ENCODE measurements at regions of chr5 and their contacts with region 1.

Region 1: DNA sequence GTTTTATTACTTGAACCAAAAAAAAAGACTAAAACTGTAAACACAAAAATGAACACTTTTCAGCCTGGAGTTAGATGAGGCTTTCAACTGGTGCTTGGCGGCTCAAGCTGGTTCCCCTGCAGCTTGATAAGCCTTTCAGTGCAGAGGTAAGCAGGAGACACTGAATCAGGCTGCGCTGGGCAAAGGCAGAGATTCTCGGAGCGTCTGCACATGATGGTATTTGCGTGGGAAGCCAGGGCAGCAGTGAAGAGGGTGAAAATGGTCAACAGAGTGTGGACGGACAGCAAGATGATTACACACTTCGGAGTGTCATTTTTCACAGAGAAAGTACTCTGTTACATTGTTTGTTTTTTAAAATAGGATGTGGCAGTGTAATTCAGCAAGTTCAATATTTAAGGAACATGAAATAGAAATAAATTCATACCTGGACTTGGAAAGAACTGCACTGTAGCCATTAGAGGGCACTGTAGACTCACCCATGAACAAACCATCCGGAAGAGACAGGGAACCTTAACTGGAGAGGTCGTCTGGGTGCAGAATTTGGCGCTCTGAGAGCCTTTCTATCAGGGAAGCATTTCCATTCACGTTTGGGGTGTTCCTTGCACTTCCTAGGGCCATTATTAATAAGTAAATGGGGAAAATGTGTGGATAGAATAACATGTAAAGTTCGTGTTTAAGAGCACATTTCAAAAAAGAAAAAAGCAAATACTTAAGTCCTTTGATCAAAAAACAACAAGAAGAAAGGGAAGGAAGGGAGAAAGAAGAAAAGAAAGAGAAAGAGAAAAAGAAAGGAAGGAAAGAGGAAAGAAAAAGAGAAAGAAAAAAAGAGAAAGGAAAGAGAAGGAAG is 69.8 kb downstream of the ICE1 start:
- DNase-seq: peak; percentile 36
- H3K4me3 ChIP-seq: no peak overlapping the region
- H3K27ac ChIP-seq: no peak overlapping the region
- H3K4me1 ChIP-seq: no peaks in the 10 kb centered on the region
- H3K27me3 ChIP-seq: no peaks in the 10 kb centered on the region
- CTCF ChIP-seq: peak; percentile 42

Region 2: DNA sequence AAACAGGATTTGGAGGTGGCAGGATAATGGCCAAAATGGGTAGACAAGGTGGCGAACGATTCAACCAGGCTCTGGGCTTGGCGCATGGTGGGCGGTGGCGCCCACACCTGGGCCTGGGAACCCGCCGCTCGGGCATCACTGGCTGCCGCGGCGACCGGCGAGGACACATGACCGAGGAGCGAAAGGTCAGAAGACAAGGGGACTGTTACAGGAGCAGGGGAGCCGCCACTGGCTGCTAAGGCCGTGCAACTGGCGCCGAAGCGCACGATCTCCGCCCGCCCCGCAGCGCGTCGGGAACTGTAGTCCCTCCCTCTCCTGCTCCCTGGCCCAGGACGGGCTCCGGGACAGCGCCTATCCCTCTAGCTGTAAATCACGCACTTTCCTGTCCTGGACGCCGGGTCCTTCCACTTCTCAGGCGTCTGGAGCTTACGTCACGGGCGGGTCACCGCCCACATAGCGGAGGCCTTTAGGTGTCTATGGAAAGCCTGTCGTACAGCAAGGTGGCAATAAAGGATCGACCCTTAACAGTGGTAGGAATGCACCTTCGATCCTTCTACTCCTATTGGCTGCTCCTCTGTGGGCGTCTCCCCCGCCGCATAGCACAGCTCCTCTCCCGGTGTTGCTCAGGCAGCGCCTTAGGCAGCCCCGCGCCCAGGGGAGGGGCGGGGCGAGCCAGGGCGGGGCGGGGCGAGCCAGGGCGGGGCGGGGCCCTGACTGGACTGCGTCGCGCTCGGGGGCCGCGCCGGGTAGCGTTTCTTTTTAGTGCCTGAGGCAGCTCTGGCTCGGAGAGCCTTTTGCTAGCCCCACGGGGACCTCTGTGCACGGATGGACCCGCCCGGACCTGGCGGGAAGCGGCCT is 70.1 kb before region 1 on chr5 and contains the start of gene ICE1:
- intact Hi-C with region 1: loop called (anchors 2 kb)
- DNase-seq: peak; percentile 97
- H3K4me3 ChIP-seq: peak within 1 kb of the TSS; percentile 98
- H3K27ac ChIP-seq: peak within 1 kb of the TSS; percentile 93
- H3K4me1 ChIP-seq: peaks cover 6% of the 10 kb centered on the region
- H3K27me3 ChIP-seq: no peaks in the 10 kb centered on the region
- CTCF ChIP-seq: no peak
- total RNA-seq, gene ICE1: 19.2 to 20.1 TPM

Region 3: GRCh38 chr5:5755888-5756287 is 263.6 kb after region 1 on chr5:
- intact Hi-C with region 1: no loop called
- DNase-seq: no peak
- H3K4me3 ChIP-seq: no peak overlapping the region
- H3K27ac ChIP-seq: no peak overlapping the region
- H3K4me1 ChIP-seq: no peaks in the 10 kb centered on the region
- H3K27me3 ChIP-seq: no peaks in the 10 kb centered on the region
- CTCF ChIP-seq: no peak

Region 4: DNA sequence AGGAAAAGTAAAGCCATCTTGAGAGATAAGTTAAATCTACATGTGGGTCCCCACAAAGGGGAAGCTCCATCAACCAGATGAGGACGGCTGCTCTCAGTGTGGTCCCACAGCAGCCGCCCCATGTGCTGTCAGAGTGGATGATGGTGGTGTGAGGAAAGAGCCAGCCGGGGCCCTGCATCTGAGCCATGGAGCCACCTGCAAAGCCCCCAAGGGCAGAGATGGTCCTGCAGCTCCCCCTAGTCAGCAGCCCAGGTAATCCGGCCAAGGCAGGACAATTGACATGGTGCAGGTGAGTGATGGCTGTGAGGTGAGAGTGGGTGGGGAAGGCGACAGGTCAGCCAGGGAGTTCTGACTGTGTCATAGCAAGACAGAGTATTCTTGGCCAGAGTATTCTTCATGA is 389.0 kb after region 1 on chr5:
- intact Hi-C with region 1: loop called (anchors 5 kb)
- DNase-seq: no peak
- H3K4me3 ChIP-seq: no peak overlapping the region
- H3K27ac ChIP-seq: no peak overlapping the region
- H3K4me1 ChIP-seq: no peaks in the 10 kb centered on the region
- H3K27me3 ChIP-seq: no peaks in the 10 kb centered on the region
- CTCF ChIP-seq: no peak

Region 5: GRCh38 chr5:6383376-6383775 is 891.1 kb after region 1 on chr5:
- intact Hi-C with region 1: loop called (anchors 10 kb)
- DNase-seq: no peak
- H3K4me3 ChIP-seq: no peak overlapping the region
- H3K27ac ChIP-seq: no peak overlapping the region
- H3K4me1 ChIP-seq: no peaks in the 10 kb centered on the region
- H3K27me3 ChIP-seq: no peaks in the 10 kb centered on the region
- CTCF ChIP-seq: no peak

Region 6: DNA sequence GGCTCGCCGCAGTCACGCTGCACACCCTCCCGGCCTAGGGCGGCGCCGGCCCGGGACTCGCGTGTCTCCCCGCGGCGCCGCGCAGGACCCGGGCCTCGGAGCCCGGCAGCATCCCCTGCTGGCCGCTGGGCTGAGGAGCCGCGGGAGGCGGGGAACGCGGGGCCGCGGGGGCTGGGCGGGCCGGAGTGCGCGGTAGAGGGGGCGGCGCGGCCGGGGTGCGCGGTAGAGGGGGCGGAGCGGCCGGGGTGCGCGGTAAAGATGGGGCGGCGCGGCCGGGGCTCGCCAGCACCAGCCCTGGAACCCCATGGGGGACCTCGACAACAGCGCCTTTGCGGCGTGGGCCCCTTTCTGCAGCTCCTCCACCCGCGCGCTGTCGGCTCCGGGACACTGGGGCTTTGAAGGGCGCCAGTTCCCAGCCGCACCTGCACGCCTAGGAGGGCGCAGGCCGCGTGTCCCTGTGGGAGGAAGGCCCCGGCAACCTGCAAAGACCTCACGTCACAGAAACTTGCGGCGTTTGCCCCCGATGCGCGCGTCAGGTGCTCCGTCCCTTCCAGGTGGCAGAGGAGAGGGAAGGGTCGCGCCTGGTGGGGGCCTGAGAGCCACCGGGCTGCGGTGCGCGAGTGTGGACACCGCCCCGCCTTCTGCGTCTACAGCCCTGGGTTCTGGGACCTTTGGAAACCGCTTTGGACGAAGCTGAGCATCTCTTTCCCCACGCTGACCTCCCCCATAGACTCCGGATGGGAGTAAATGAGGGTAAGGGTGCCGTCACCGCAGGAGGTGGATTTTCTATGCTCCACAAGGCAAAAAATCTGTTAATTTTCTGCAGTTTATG is 1091.0 kb after region 1 on chr5:
- intact Hi-C with region 1: loop called (anchors 10 kb)
- DNase-seq: no peak
- H3K4me3 ChIP-seq: peak overlapping the region; percentile 20
- H3K27ac ChIP-seq: no peak overlapping the region
- H3K4me1 ChIP-seq: no peaks in the 10 kb centered on the region
- H3K27me3 ChIP-seq: peaks cover 13% of the 10 kb centered on the region
- CTCF ChIP-seq: no peak

Region 7: DNA sequence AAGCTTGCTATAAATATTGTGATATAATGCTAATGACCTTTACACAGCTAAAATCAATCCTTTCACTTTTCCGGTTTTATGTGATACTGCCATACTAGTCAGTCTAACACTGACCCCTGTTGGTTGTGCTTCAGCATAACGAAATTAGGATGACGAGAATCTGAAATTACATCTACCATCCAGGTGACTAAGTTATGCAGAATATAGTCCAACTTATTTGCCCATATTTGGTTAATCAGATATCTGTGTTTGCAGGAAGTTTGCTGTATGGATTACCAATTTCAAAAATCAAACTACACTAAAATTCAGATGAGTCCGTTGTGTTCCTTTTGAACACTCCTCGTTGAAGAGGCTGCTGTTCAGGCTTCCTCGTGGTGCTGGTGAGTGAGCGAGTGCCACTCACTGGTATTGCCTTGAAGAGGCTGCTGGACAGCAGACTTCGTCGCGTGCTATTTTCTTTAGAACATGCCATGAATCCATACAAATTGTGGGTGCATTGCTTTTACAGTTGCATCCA is 1253.5 kb after region 1 on chr5:
- intact Hi-C with region 1: loop called (anchors 10 kb)
- DNase-seq: no peak
- H3K4me3 ChIP-seq: no peak overlapping the region
- H3K27ac ChIP-seq: no peak overlapping the region
- H3K4me1 ChIP-seq: no peaks in the 10 kb centered on the region
- H3K27me3 ChIP-seq: no peaks in the 10 kb centered on the region
- CTCF ChIP-seq: peak; percentile 70

Measured in colonic mucosa (tissue), 4 donors.